ENCODE measurements at regions of chr3 and their contacts with region 1.

Region 1: DNA sequence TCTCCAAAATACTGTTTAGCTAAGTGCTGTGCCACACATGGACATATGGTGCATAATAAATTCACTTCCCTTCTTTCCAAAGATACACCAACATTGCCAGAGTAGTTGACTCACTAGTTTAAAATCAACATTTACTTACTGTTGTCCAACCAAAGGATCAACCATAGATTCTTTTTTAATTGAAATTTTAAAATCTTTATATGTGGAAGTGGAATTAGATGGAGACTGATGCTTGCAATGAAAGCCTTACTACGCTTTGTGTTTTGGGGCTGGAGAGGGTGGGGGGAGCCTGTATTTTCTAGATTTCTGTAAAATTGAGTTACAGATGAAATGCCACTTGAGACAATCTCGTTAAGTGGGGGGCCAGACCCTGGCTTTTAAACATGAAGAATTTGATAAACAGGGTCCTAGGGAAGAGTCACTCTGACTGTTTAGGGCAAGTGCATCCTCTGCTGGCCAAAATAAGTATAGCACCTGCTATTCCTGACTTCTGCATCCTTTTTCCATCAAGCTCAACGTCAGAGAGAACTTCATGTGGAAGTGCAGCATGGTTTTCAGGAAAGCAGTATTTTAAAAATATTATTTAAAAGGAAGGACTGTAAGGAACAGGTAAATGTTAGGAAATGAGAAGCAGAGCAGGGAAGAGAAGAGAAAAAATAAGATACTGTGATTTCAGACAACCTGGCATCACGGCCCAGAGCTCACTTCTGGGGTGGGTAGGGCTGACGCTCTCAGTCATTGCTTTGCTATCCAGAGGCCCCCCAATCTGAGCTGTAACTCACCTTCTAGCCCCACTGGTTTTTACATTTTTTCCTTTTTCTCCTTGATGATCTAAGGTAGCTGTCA is 76.7 kb downstream of the BOC start:
- DNase-seq: no peak
- H3K4me3 ChIP-seq: no peak overlapping the region
- H3K27ac ChIP-seq: no peak overlapping the region
- H3K4me1 ChIP-seq: no peaks in the 10 kb centered on the region
- H3K27me3 ChIP-seq: no peaks in the 10 kb centered on the region
- CTCF ChIP-seq: peak; percentile 77 to 93 (median 86)
- POLR2A ChIP-seq: no peak

Region 2: DNA sequence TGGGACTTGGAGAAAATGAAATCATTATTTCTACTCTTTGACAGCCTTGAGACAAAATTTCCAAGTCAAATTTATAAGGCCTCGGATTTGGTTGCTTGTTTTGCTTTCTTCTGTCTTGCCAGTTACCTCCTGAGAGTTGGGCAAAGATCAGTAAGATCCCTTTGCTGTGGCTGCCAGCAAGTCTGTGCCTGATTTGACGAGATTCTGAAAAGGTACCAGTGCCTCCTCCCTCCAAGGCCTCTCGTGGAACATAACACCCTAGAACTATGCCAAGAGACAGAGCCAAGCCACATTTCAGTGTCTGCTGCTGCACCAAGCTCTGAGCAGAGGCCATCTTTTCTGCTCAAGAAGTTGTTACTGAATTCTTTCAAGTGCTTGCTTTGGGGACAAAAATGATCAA is 236.2 kb before region 1 on chr3:
- intact Hi-C with region 1: loop called (anchors 2 kb)
- DNase-seq: no peak
- H3K4me3 ChIP-seq: no peak overlapping the region
- H3K27ac ChIP-seq: no peak overlapping the region
- H3K4me1 ChIP-seq: peaks cover 0 to 32% (median 13%) of the 10 kb centered on the region in 6 donors
- H3K27me3 ChIP-seq: no peaks in the 10 kb centered on the region
- CTCF ChIP-seq: no peak
- POLR2A ChIP-seq: no peak

Region 3: GRCh38 chr3:113136071-113136470 is 152.0 kb before region 1 on chr3:
- intact Hi-C with region 1: loop called (anchors 10 kb)
- DNase-seq: no peak
- H3K4me3 ChIP-seq: no peak overlapping the region
- H3K27ac ChIP-seq: no peak overlapping the region
- H3K4me1 ChIP-seq: no peaks in the 10 kb centered on the region
- H3K27me3 ChIP-seq: no peaks in the 10 kb centered on the region
- CTCF ChIP-seq: peak in 6 of 11 experiments; percentile 31 to 47 (median 44)
- POLR2A ChIP-seq: no peak

Measured in spleen (tissue), 13 donors.